Tibial artery (tissue), 4 donors: ENCODE measurements at regions of chr20 and their contacts with region 1.

Region 1: GRCh38 chr20:39081255-39081654 is 119.1 kb downstream of the DHX35 start:
- DNase-seq: peak; percentile 81 to 88
- H3K4me3 ChIP-seq: no peak overlapping the region
- H3K27ac ChIP-seq: no peak overlapping the region
- H3K4me1 ChIP-seq: no peaks in the 10 kb centered on the region
- H3K27me3 ChIP-seq: peaks cover 0 to 54% of the 10 kb centered on the region in 2 donors
- CTCF ChIP-seq: peak; percentile 80 to 95

Region 2: DNA sequence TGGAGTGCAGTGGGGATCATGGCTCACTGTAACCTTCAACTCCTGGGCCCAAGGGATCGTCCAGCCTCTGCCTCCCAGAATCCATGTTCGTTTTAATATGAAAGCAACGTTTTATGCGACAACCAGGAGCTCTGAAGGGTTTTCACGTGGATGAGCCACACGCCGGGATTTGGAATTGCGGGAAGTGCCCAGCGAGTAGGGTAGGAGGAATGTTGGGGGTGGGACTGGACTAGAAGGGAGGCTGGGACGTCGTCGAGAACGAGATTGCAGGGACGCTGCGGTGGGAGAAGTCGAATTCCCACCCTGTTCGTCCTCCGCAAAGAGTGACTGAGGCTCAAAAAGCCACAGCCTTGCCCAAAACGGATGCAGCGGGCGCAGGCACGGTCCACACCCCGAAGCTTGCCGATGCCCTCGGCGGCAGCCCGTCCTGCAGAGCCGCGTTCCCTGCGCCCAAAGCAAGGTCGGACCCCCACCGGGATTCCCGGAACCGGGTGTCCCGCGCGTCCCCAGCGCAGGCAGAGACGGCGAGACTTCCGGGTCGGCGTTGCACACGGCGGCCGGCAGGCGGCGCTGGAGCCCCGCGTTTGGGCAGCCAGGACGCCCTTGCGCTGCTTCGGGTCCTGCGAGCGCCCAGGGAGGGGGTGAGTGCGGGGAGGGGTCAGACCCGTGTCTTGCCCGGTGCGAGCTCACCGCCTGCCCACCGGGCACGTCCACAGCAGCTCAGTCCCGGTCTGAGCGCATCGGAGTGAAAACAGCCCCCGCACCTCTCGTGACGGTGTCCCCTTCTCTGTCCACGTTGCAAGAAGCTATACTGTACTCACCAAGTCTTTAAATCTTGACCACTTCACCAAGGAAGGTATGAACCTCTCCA is 31.3 kb before region 1 on chr20:
- intact Hi-C with region 1: loop called (anchors 2 kb)
- DNase-seq: peak; percentile 49 to 84
- H3K4me3 ChIP-seq: peak overlapping the region; percentile 59 to 74
- H3K27ac ChIP-seq: peak overlapping the region; percentile 70 to 71
- H3K4me1 ChIP-seq: peaks cover 0 to 7% (median 2%) of the 10 kb centered on the region in 4 donors
- H3K27me3 ChIP-seq: peaks cover 0 to 9% of the 10 kb centered on the region in 2 donors
- CTCF ChIP-seq: peak; percentile 96 to 97

Region 3: DNA sequence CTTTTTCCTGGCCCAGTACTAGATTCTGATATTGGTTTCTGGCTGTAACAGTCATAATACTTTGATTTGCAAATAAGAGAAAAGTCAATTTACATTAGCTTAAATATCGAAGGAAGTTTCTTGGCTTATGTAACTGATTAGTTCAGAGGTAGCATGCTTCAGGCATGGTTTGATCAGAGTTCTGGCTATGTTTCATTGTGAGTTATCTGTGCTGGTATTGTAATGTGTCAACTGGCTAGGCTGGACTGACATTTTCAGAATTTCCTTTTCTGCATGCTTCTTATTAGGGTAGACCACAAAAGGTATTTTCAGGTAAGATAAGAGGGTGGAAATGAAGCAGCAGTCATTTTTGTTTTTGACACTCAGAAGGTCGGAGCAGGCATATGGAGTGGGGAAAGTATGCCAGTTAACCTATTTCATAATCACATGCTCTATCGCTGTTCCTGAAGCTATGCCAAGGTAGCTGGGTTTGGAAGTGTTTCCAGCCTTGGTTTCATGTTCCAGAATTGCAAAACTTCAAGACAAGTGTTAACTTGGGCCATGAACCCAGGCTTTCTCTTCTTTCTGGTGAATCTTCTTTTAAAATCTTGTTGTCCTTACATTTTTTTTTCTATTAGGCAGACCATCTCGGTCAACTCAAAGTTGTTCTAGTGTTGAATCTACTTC is 125.8 kb after region 1 on chr20:
- intact Hi-C with region 1: no loop called
- DNase-seq: no peak
- H3K4me3 ChIP-seq: no peak overlapping the region
- H3K27ac ChIP-seq: no peak overlapping the region
- H3K4me1 ChIP-seq: no peaks in the 10 kb centered on the region
- H3K27me3 ChIP-seq: no peaks in the 10 kb centered on the region
- CTCF ChIP-seq: no peak